ENCODE measurements at regions of chr15 and their contacts with region 1.

Region 1: DNA sequence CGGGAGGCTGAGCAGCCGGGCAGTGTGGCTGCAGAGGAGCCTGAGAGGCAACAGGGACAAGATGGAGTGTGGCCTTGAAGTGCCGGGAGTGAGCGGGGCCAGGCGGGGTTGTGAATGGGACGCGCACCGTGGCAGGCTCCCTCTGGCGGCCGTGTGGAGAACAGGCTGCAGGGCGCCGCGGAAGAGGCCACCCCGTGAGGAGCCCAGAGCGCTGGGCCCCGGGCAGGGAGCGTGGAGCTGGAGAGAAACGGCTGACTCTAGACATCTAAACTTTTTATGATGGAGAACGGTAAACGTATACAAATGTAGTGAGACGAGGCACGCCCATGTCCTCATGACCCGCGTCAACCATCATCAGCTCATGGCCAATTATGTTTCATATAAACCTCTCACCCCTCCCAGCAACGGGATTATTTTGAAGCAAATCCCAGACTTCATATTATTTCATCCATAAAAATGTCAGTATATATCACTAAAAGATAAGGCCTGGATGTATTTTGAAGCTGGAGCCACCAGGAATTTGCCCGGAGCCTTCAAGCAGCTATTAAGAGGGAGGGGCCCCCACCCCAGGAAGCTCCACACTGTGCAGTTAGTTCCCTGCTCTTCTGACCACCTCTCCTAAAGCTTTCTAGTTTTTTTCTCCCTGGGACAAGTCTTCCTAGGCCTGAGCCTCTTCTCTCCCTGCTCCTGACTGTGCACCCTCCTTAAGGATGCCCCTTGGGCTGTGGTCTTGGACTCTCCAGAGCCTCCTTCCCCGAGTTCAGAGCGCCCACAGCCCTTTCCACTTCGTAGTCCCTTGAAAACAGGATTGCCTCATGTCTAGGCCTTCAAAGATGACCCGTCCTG is 149.4 kb downstream of the SMAD6 start:
- DNase-seq: peak; percentile 92

Region 2: GRCh38 chr15:66619151-66619903 is 232.1 kb before region 1 on chr15:
- CTCF ChIA-PET with region 1: interaction called, 16 read pairs
- POLR2A ChIA-PET with region 1: interaction called, 4 read pairs
- DNase-seq: peak; percentile 83

Region 3: DNA sequence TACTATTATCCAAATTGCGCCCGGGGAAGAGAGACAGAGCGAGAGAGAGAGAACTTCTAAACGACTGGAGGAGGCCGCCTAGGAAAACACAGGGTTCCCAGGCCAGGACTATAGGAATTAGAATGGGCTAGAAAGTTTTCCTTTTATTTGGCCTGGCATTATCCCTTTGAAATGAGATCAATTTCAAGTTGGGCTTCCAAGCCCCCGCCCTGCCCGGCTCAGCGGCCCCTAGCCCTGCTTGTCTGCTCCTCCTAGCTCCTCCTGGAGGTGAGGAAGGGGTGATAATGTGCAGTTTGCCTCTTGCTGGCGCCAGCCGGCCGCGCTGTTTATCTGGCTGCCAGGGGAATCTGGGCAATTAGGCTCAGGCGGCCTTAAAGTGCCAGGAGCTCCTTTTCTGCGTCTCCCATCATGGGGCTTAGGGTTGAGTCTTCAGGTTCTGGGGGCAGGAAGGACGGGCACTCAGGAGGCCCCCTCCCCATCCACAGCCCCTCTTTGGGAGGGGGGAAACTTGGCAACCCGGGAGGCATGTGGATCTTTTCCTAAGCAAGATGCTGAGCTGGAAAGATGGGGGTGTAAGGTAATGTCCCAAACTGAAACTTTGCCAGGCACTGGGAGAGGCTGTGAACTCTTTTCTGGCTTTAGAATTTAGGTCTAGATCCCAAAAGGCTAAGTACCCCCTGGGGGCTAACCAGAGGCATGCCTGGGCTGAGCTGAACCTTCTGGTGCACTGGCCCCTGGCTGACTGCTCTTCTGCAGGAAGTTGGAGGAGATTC is 144.0 kb before region 1 on chr15:
- CTCF ChIA-PET with region 1: interaction called, 28 read pairs
- POLR2A ChIA-PET with region 1: interaction called, 31 read pairs
- DNase-seq: peak; percentile 74

Region 4: GRCh38 chr15:66789029-66790025 is 62.1 kb before region 1 on chr15:
- CTCF ChIA-PET with region 1: interaction called, 13 read pairs
- POLR2A ChIA-PET with region 1: interaction called, 10 read pairs
- DNase-seq: peak; percentile 49

Region 5: GRCh38 chr15:67178569-67179210 is 327.2 kb after region 1 on chr15:
- CTCF ChIA-PET with region 1: no interaction called
- POLR2A ChIA-PET with region 1: no interaction called
- DNase-seq: no peak

Region 6: DNA sequence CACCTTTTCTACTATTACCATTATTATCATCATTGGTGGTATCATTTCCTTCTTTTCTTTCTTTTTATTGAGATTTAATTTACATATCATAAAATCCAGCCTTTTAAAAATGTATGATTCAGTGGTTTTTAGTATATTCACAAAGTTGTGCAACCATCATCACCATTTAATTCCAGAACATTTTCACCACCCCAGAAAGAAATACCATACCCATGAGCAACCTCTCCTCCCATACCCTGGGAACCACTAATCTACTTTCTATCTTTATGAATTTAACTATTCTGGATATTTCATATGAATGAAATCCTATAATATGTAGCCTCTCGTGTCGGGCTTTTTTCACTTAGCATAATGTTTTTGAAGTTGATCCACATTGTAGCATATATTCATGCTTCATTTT is 373.9 kb after region 1 on chr15:
- CTCF ChIA-PET with region 1: no interaction called
- POLR2A ChIA-PET with region 1: no interaction called
- DNase-seq: no peak